ENCODE measurements at regions of chr2 and their contacts with region 1.

Region 1: GRCh38 chr2:135124924-135125886 is 73.1 kb downstream of the RAB3GAP1 start:
- DNase-seq: peak; percentile 83
- H3K4me3 ChIP-seq: no peak overlapping the region
- H3K27ac ChIP-seq: peak overlapping the region; percentile 95
- H3K4me1 ChIP-seq: peaks cover 17% of the 10 kb centered on the region
- H3K27me3 ChIP-seq: no peaks in the 10 kb centered on the region
- CTCF ChIP-seq: no peak

Region 2: DNA sequence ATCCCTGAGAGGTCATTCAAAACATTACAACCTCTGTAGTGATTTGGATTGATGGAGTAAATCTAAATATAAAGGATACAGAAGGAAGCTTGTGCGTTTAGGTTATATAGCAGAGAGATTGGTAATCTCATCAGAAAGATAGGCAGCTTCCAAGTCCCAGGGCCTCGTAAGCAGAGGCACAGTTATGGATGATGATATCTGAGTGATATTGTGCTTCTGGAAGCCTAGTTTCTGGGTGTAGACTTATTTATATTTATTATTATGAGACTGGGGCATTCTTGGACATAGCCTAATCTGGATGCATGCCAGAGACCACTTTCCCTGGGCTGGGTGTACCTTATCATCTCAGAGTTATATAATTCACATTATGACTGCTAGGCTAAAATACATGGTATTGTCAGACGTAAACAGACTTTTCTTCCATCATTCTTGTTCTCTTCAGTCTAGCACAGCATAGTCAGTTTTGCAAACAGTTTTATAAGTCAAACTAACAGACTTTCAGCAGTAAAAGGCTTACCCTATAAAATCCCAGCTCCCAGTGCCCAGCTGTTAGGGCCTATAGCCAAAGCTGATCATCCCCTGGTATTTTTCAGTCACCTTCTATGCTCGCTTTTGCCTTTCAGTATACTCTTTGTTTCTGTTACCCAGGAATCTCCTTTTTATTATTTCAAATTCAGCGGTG is 25.3 kb before region 1 on chr2:
- CTCF ChIA-PET with region 1: no interaction called
- dilution Hi-C with region 1: no loop called
- in situ Hi-C with region 1: no loop called
- intact Hi-C with region 1: loop called (anchors 2 kb)
- DNase-seq: no peak
- H3K4me3 ChIP-seq: no peak overlapping the region
- H3K27ac ChIP-seq: no peak overlapping the region
- H3K4me1 ChIP-seq: peaks cover 24% of the 10 kb centered on the region
- H3K27me3 ChIP-seq: no peaks in the 10 kb centered on the region
- CTCF ChIP-seq: no peak

Region 3: GRCh38 chr2:135281379-135281778 is 156.2 kb after region 1 on chr2:
- CTCF ChIA-PET with region 1: no interaction called
- dilution Hi-C with region 1: no loop called
- in situ Hi-C with region 1: no loop called
- intact Hi-C with region 1: no loop called
- DNase-seq: no peak
- H3K4me3 ChIP-seq: no peak overlapping the region
- H3K27ac ChIP-seq: no peak overlapping the region
- H3K4me1 ChIP-seq: no peaks in the 10 kb centered on the region
- H3K27me3 ChIP-seq: no peaks in the 10 kb centered on the region
- CTCF ChIP-seq: no peak

Region 4: DNA sequence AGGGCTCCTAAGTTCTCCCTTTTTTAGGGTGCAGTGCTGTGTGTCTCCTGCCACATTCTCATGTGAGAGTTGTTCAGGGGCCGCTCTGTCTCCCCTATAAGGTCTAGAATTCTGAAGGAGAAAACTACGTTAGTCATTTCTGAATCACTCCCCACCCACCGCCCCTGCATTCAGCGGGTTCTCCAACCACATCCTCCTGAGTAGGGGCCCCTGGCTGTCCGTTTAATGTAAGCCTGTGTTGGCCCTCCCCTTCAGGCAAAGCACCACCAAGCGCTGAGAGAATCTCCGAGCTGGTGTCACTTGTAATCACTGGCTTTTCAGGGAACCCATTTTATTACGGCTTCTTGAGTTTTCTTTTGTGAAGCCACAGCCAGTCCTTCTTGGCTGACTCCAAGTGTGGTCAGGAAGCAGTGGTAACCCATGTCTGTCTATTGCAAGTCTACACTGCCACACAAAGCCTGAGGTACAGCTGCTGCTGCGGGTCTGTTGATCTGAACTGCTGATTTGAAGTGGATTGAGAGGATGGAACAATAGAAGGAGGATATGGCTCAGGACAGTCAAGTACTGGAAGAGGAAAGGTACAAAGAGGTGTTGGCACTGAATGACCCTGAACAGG is 694.9 kb after region 1 on chr2:
- CTCF ChIA-PET with region 1: no interaction called
- dilution Hi-C with region 1: no loop called
- in situ Hi-C with region 1: no loop called
- intact Hi-C with region 1: no loop called
- DNase-seq: no peak
- H3K4me3 ChIP-seq: no peak overlapping the region
- H3K27ac ChIP-seq: no peak overlapping the region
- H3K4me1 ChIP-seq: no peaks in the 10 kb centered on the region
- H3K27me3 ChIP-seq: no peaks in the 10 kb centered on the region
- CTCF ChIP-seq: no peak